Heart right ventricle (tissue), 16 donors: ENCODE measurements at regions of chr10 and their contacts with region 1.

Region 1: DNA sequence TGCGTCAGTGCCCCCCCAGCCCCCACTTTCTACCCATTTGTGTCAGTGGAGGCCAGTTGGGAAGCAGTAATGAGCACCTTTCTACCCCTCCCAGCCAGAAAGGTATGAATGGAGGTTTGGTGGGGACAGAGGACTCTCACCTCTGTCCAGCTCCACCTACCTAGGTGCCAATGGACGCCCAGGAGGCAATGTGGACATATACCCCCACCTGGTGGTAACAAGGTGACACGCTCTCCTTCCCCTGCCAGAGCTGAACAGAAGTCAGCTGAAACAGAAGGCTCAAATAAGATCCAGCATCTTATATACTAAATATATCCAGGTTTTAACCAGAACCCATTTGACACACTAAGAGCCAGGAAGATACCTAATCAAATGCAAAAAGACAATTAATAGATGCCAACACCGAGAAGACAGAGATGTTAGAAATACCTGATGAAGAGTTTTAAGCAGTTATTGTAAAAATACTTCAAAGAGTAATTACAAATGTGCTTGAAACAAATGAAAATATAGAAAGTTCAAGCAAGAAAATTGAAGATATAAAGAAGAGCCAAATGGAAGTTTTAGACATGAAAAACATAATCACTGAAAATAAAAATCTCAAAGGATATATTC is 18.4 kb upstream of the SORCS3 start:
- DNase-seq: no peak
- ATAC-seq: peak in 1 of 8 donors; percentile 47
- H3K4me3 ChIP-seq: no peak overlapping the region
- H3K27ac ChIP-seq: no peak overlapping the region
- H3K4me1 ChIP-seq: no peaks in the 10 kb centered on the region
- H3K27me3 ChIP-seq: peaks cover 0 to 48% (median 29%) of the 10 kb centered on the region in 7 donors
- CTCF ChIP-seq: peak in 6 of 9 donors; percentile 27 to 40 (median 37)

Region 2: GRCh38 chr10:104359811-104360210 is 262.9 kb before region 1 on chr10:
- intact Hi-C with region 1: no loop called
- DNase-seq: no peak
- ATAC-seq: no peak
- H3K4me3 ChIP-seq: no peak overlapping the region
- H3K27ac ChIP-seq: no peak overlapping the region
- H3K4me1 ChIP-seq: peaks cover 0 to 3% (median 0%) of the 10 kb centered on the region in 9 donors
- H3K27me3 ChIP-seq: no peaks in the 10 kb centered on the region
- CTCF ChIP-seq: no peak

Region 3: GRCh38 chr10:104406715-104407650 is 215.7 kb before region 1 on chr10:
- intact Hi-C with region 1: loop called in 4 of 10 experiments (anchors 5 to 10 kb)
- DNase-seq: no peak
- ATAC-seq: peak in 1 of 8 donors; percentile 51
- H3K4me3 ChIP-seq: no peak overlapping the region
- H3K27ac ChIP-seq: no peak overlapping the region
- H3K4me1 ChIP-seq: no peaks in the 10 kb centered on the region
- H3K27me3 ChIP-seq: no peaks in the 10 kb centered on the region
- CTCF ChIP-seq: peak in 7 of 9 donors; percentile 36 to 62 (median 47)

Region 4: DNA sequence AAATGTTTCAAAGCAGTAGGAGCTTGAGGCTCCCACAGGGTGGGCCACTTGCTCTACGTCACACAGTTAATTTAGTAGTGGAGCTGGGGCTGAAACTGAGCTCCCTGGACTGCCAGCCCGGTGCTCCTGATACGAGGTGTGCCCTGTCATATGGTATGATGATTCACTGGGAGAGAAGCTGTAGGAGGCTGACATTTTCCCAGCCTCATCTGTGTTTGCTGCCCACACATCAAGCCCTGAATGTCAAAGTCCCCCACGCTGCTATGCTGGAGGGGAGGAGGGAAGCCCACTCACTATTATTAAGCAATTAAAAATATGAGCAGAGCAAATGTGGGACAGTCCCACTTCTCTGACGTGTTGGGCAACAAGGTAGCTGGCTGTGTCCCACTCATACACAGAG is 62.8 kb before region 1 on chr10:
- intact Hi-C with region 1: no loop called
- DNase-seq: no peak
- ATAC-seq: no peak
- H3K4me3 ChIP-seq: no peak overlapping the region
- H3K27ac ChIP-seq: no peak overlapping the region
- H3K4me1 ChIP-seq: no peaks in the 10 kb centered on the region
- H3K27me3 ChIP-seq: peaks cover 0 to 6% (median 3%) of the 10 kb centered on the region in 7 donors
- CTCF ChIP-seq: no peak